ENCODE measurements at regions of chr4 and their contacts with region 1.

Region 1: DNA sequence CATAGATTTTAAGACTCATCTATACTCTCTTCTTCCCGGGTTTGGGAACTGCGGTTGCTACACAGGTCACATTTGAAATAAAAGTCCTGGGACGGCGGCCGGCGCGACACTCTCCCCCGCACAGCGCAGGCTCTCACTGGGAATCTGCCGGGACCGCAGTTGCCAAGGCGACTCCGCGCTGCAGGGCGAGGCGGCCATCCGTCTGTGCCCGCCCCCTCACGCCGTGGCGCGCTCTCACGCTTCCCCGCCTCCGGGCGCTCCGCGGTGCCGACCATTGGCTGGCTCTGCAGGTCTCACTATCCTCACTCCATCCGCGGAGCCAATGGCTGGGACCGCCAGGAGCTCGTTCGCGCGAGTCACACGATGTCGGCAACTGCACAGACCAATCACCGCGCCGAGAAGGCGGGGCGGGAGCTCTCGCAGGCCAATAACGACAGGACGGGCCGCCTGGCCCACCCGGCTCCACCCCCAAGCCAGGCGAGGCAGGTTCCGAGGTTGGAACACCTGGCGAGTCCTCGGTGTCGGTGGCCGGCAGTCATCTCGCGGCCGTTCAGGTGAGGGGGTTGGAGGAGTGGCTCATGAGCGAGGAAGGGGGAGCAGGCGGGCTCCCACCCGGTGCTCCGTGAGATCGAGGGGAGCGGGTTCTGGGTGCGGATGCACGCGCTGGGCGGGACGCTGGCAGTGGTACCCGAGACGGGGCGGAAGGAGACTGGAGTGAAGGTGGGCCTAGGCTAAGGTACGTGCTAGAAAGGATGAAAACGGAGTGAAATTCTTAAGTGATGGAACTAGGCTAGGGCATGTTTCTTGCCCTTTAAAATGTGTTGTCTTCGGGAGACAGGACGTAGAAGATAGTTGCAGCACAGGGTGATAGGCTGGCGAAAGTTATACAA is at the start of gene MSMO1:
- DNase-seq: peak; percentile 99
- H3K4me3 Mint-ChIP-seq: no peak within 1 kb of the TSS
- H3K27ac Mint-ChIP-seq: no peak within 1 kb of the TSS
- H3K4me1 Mint-ChIP-seq: peaks cover 37% of the 10 kb centered on the region
- H3K27me3 Mint-ChIP-seq: no peaks in the 10 kb centered on the region
- total RNA-seq, gene MSMO1: 63.7 to 67.1 TPM

Region 2: DNA sequence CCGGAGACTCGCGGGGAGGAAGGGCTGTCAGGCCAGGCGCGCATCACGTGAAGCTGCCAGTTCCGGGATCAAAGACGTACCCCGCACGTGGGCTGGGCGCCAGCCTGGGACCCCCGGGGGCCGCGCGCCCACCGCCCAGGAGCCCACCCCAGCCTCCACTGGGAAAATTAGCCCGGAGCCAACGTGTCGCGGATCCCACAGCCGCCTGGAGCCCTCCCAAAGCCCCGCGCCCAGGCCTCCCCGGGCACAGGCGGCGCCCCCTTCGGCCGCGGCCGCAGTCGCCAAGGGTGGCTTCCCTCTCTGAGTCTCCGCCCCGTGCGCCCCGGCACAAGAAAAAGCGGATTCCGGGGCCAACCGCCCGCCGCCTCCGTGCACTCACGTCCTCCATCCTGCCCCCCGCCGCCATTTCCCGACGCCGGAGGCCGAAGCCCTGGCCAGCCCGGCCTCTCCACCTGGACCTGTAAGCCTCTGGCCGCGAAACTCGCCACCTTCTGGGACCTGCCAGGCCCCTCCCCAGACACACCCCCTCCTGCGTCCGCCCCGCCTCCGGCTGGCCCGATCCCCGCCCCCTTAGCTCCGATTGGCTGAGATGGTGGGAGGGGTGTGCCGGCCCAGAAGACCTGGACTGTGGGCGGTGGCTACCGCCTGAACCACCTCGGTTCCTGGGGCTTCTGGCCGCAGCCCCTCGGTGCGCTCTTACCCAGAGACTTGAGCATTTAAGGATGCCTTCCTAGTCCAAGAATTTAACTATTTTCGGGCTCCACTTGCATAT is 214.9 kb before region 1 on chr4 and contains the start of gene TMEM192:
- CTCF ChIA-PET with region 1: interaction called, 8 read pairs
- POLR2A ChIA-PET with region 1: no interaction called
- intact Hi-C with region 1: loop called (anchors 1 kb)
- DNase-seq: peak; percentile 95
- H3K4me3 Mint-ChIP-seq: peak within 1 kb of the TSS; percentile 93
- H3K27ac Mint-ChIP-seq: peak within 1 kb of the TSS; percentile 89
- H3K4me1 Mint-ChIP-seq: peaks cover 14% of the 10 kb centered on the region
- H3K27me3 Mint-ChIP-seq: no peaks in the 10 kb centered on the region
- total RNA-seq, gene TMEM192: 8.8 to 9.0 TPM

Region 3: GRCh38 chr4:165190591-165191347 is 136.7 kb before region 1 on chr4:
- CTCF ChIA-PET with region 1: no interaction called
- POLR2A ChIA-PET with region 1: interaction called, 3 read pairs
- intact Hi-C with region 1: loop called (anchors 2 kb)
- DNase-seq: peak; percentile 63
- H3K4me3 Mint-ChIP-seq: no peak overlapping the region
- H3K27ac Mint-ChIP-seq: peak overlapping the region; percentile 58
- H3K4me1 Mint-ChIP-seq: peaks cover 26% of the 10 kb centered on the region
- H3K27me3 Mint-ChIP-seq: no peaks in the 10 kb centered on the region

Region 4: DNA sequence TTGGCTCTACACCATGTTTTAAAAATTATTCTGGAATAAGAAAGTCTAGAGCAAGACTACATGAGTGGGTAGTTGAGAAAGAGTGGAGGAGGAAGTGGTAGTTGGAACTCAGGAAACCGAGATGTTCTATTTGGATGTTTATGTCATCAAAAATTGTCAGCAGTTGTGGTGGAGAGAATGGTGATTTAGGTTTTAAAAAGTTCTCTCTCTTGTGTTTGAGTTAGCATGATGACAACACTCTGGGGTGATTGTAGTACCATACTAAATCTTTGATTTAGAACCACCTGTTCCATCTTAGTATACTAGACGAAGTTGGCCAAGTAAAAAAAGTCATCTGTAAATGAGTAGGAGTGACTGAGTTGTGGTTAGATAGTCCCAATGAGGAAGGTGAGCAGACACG is 79.4 kb before region 1 on chr4:
- CTCF ChIA-PET with region 1: no interaction called
- POLR2A ChIA-PET with region 1: no interaction called
- intact Hi-C with region 1: loop called (anchors 2 kb)
- DNase-seq: no peak
- H3K4me3 Mint-ChIP-seq: no peak overlapping the region
- H3K27ac Mint-ChIP-seq: no peak overlapping the region
- H3K4me1 Mint-ChIP-seq: peaks cover 4% of the 10 kb centered on the region
- H3K27me3 Mint-ChIP-seq: no peaks in the 10 kb centered on the region

Measured in activated CD4-positive, alpha-beta memory T cell treated with anti-CD3 and anti-CD28 coated beads for 36 hours (primary cell).